ENCODE measurements at regions of chr13 and their contacts with region 1.

Region 1: GRCh38 chr13:98142380-98143156 is at the start of gene FARP1:
- DNase-seq: peak; percentile 66 to 88
- H3K4me3 ChIP-seq: peak within 1 kb of the TSS; percentile 73 to 81
- H3K27ac ChIP-seq: peak within 1 kb of the TSS; percentile 64 to 73
- H3K4me1 ChIP-seq: peaks cover 0 to 31% (median 18%) of the 10 kb centered on the region in 4 donors
- H3K27me3 ChIP-seq: no peaks in the 10 kb centered on the region
- CTCF ChIP-seq: peak; percentile 17 to 63

Region 2: GRCh38 chr13:97986835-97987234 is 155.7 kb before region 1 on chr13:
- intact Hi-C with region 1: no loop called
- DNase-seq: peak in 1 of 2 donors; percentile 28
- H3K4me3 ChIP-seq: no peak overlapping the region
- H3K27ac ChIP-seq: no peak overlapping the region
- H3K4me1 ChIP-seq: peaks cover 0 to 1% (median 0%) of the 10 kb centered on the region in 4 donors
- H3K27me3 ChIP-seq: no peaks in the 10 kb centered on the region
- CTCF ChIP-seq: no peak

Region 3: GRCh38 chr13:98216135-98216565 is 73.6 kb after region 1 on chr13:
- intact Hi-C with region 1: loop called (anchors 10 kb)
- DNase-seq: peak; percentile 32 to 87
- H3K4me3 ChIP-seq: no peak overlapping the region
- H3K27ac ChIP-seq: peak overlapping the region; percentile 13 to 32
- H3K4me1 ChIP-seq: peaks cover 0 to 42% (median 25%) of the 10 kb centered on the region in 4 donors
- H3K27me3 ChIP-seq: no peaks in the 10 kb centered on the region
- CTCF ChIP-seq: peak in 1 of 2 experiments; percentile 9

Region 4: GRCh38 chr13:98397221-98397620 is 254.7 kb after region 1 on chr13:
- intact Hi-C with region 1: loop called (anchors 2 kb)
- DNase-seq: no peak
- H3K4me3 ChIP-seq: no peak overlapping the region
- H3K27ac ChIP-seq: no peak overlapping the region
- H3K4me1 ChIP-seq: no peaks in the 10 kb centered on the region
- H3K27me3 ChIP-seq: no peaks in the 10 kb centered on the region
- CTCF ChIP-seq: peak in 1 of 2 experiments; percentile 42

Region 5: GRCh38 chr13:98641075-98641474 is 498.5 kb after region 1 on chr13:
- intact Hi-C with region 1: no loop called
- DNase-seq: no peak
- H3K4me3 ChIP-seq: no peak overlapping the region
- H3K27ac ChIP-seq: no peak overlapping the region
- H3K4me1 ChIP-seq: no peaks in the 10 kb centered on the region
- H3K27me3 ChIP-seq: peaks cover 0 to 2% of the 10 kb centered on the region in 2 donors
- CTCF ChIP-seq: no peak

Measured in tibial artery (tissue), 4 donors.